Dorsolateral prefrontal cortex (tissue), 120 donors: ENCODE measurements at regions of chrX and their contacts with region 1.

Region 1: DNA sequence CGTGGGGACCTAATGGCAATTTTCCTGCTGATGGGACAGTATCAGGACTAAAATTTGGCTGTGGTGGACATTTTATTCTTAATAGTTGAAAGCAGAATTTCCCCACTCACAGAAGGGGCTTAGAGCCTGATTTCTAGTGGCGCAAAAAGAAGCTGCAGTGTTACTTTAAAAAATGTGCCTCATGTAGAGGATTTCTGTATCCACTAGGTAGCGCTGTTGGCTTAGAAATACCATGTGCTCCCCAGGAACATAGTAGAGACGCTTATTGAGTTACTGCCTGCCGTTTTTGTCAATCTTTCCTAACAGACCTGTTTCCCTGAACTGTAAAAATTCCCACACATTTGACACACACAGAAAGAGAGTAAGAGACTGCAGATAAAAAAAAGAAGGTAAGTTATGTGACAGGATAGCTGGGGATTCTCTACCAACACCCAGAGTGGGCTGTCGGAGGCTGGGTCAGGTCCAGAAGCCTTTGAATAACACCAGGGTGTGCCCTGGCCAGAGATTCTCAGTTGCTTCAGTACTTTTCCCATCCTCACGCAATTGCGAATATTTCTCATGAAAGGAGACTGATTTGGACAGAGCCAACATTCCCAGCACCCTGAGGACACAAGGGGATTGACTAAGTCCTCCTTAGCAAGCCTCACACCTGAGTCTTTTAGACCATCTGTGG is 88.4 kb downstream of the ZXDA start:
- DNase-seq: peak in 2 of 10 donors; percentile 12 to 33
- H3K4me3 ChIP-seq: peak overlapping the region in 54 of 59 donors; percentile 3 to 57 (median 34)
- H3K27ac ChIP-seq: peak overlapping the region in 1 of 59 donors; percentile 44
- H3K27me3 ChIP-seq: peaks cover 0 to 48% (median 9%) of the 10 kb centered on the region in 45 donors
- CTCF ChIP-seq: peak; percentile 52 to 85 (median 73)

Region 2: GRCh38 chrX:57587607-57588006 is 234.2 kb before region 1 on chrX:
- intact Hi-C with region 1: loop called in 1 of 2 experiments (anchors 10 kb)
- DNase-seq: no peak
- H3K4me3 ChIP-seq: no peak overlapping the region
- H3K27ac ChIP-seq: no peak overlapping the region
- H3K27me3 ChIP-seq: peaks cover 0 to 36% (median 0%) of the 10 kb centered on the region in 45 donors
- CTCF ChIP-seq: no peak

Region 3: DNA sequence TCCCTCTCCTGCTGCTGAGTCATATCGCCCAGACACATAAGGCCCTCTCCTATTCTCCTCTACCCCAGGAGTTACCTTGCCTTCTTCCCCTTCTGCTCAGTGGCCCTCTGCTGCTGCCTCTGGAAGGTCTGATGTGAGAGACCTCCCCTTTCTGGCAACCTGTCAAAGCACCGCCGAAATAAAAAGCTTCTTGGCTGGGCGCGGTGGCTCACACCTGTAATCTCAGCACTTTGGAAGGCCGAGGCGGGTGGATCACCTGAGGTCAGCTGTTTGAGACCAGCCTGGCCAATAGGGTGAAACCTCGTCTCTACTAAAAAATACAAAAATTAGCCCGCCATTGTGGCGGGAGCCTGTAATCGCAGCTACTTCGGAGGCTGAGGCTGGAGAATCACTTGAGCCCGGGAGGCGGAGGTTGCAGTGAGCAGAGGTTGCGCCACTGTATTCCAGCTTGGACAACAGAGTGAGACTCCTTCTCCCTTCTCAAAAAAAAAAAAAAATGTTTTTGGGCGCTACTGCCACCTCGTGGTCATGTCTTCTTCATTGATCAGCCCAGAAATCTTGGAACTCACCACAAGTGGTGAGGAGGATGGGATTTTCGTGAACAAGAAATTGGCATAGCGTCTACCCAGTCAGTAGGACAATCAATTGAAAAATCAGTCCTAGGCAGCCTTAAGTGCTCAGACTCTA is 97.1 kb after region 1 on chrX:
- intact Hi-C with region 1: loop called in 1 of 2 experiments (anchors 5 kb)
- DNase-seq: no peak
- H3K4me3 ChIP-seq: peak overlapping the region in 38 of 59 donors; percentile 6 to 53 (median 31)
- H3K27ac ChIP-seq: no peak overlapping the region
- H3K27me3 ChIP-seq: peaks cover 0 to 73% (median 18%) of the 10 kb centered on the region in 45 donors
- CTCF ChIP-seq: peak in 55 of 56 donors; percentile 40 to 77 (median 60)

Region 4: DNA sequence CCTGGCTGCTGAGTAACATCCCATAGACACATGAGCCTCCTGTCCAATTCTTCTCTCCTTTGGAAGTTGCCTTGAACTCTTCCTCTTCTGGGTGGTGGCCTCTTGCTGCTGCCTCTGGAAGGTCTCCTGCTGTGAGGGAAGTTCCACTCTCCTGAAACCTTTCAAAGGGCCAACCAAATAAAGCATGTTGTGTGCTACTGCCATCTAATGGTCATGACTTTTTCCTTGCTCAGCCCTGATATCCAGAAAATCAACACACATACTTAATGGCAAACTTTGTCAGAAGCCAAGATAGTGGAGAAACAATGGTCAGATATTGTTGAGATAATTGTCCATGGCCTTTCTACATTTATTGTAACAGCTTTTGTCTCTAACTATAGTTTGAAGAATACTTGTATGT is 107.5 kb after region 1 on chrX:
- intact Hi-C with region 1: loop called (anchors 5 kb)
- DNase-seq: no peak
- H3K4me3 ChIP-seq: no peak overlapping the region
- H3K27ac ChIP-seq: no peak overlapping the region
- H3K27me3 ChIP-seq: peaks cover 0 to 57% (median 5%) of the 10 kb centered on the region in 45 donors
- CTCF ChIP-seq: peak; percentile 7 to 77 (median 52)

Region 5: DNA sequence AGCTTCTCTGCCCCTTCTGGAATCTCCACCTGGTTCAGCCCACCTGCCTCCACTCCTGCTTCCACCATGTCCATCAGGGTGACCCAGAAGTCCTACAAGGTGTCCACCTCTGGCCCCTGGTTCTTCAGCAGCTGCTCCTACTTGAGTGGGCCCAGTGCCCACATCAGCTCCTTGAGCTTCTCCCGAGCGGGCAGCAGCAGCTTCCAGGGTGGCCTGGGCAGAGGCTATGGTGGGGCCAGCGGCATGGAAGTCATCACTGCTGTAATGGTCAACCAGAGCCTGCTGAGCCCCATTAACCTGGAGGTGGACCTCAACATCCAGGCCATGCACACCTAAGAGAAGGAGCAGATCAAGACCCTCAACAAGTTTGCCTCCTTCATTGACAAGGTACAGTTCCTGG is 162.8 kb after region 1 on chrX:
- intact Hi-C with region 1: no loop called
- DNase-seq: no peak
- H3K4me3 ChIP-seq: no peak overlapping the region
- H3K27ac ChIP-seq: no peak overlapping the region
- H3K27me3 ChIP-seq: peaks cover 0 to 37% (median 10%) of the 10 kb centered on the region in 45 donors
- CTCF ChIP-seq: no peak

Region 6: GRCh38 chrX:58025979-58026378 is 204.1 kb after region 1 on chrX:
- intact Hi-C with region 1: loop called in 1 of 2 experiments (anchors 5 kb)
- DNase-seq: peak in 4 of 10 donors; percentile 6 to 29 (median 17)
- H3K4me3 ChIP-seq: no peak overlapping the region
- H3K27ac ChIP-seq: no peak overlapping the region
- H3K27me3 ChIP-seq: peaks cover 0 to 46% (median 7%) of the 10 kb centered on the region in 45 donors
- CTCF ChIP-seq: peak in 55 of 56 donors; percentile 19 to 77 (median 58)